PC-3 (cell line): ENCODE measurements at regions of chr17 and their contacts with region 1.

Region 1: GRCh38 chr17:48131216-48131824 is 23.8 kb downstream of the SNX11 start:
- DNase-seq: peak; percentile 96
- ATAC-seq: peak; percentile 87
- H3K4me3 ChIP-seq: no peak overlapping the region
- H3K27ac ChIP-seq: no peak overlapping the region
- H3K4me1 ChIP-seq: peaks cover 15% of the 10 kb centered on the region
- H3K27me3 ChIP-seq: no peaks in the 10 kb centered on the region
- CTCF ChIP-seq: peak; percentile 97

Region 2: GRCh38 chr17:48054238-48055185 is 76.8 kb before region 1 on chr17:
- CTCF ChIA-PET with region 1: no interaction called
- POLR2A ChIA-PET with region 1: interaction called, 18 read pairs
- intact Hi-C with region 1: no loop called
- DNase-seq: no peak
- ATAC-seq: no peak
- H3K4me3 ChIP-seq: no peak overlapping the region
- H3K27ac ChIP-seq: no peak overlapping the region
- H3K4me1 ChIP-seq: peaks cover 40% of the 10 kb centered on the region
- H3K27me3 ChIP-seq: no peaks in the 10 kb centered on the region
- CTCF ChIP-seq: no peak

Region 3: DNA sequence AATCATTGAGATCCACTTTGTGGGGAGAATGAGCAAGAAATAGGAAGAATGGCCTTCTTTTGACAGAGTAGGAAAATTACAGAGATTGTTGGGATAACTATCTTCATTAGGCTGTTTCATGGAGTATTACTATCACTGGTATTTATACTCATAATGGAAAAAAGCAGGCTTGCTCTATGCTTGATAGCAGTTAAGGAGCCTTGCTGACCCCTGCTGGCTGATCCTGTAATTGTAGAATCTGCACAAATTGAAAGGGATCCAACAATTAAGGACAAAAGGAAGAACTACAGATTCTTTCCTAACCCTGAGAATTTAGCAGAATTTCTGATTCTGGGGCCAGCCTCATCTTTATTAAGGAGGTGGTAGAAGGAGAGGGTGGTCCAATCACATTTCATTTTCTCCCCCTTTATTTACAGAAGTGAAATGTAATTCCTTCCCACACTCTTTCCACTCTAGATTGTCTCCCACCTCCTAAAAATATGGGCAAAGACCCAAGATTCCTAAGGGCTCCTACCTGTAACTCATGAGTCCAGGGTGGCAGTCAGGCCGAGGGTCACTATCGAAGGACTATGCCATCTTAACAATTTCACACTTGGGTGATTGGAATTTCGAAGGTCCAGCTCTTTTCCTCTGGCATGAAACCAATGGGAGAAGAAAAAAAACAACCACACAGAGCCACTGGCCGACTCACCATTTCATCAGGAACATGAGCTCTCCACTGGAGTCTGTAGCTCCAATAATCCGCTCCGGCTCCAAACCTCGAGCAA is 56.8 kb before region 1 on chr17:
- CTCF ChIA-PET with region 1: interaction called, 10 read pairs
- POLR2A ChIA-PET with region 1: no interaction called
- intact Hi-C with region 1: loop called (anchors 1 kb)
- DNase-seq: peak; percentile 95
- ATAC-seq: peak; percentile 91
- H3K4me3 ChIP-seq: no peak overlapping the region
- H3K27ac ChIP-seq: no peak overlapping the region
- H3K4me1 ChIP-seq: no peaks in the 10 kb centered on the region
- H3K27me3 ChIP-seq: no peaks in the 10 kb centered on the region
- CTCF ChIP-seq: peak; percentile 92

Region 4: DNA sequence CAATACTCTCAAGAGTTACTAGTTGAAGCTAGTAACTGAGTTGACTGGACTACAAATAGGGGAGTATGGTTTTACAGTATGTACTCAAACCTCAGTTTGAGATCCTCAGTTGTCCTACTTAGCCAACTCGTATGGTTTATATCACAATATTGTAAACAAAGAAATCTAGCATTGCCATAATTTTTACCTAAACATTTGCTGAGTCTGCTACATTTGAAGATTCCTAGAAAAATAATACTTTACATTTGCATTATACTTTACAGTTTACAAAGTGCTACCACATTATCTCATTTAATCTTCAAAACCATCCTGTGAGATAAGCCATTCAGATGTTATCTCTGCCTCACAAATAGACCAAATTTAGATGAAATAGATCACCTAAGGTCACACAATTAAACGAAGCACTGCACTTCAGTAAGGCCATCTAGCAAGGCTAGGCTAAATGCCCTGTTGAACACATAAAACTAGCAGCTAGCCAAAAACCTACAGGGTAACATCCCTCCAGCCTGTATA is 46.3 kb before region 1 on chr17:
- CTCF ChIA-PET with region 1: interaction called, 10 read pairs
- POLR2A ChIA-PET with region 1: no interaction called
- intact Hi-C with region 1: loop called (anchors 1 kb)
- DNase-seq: no peak
- ATAC-seq: no peak
- H3K4me3 ChIP-seq: no peak overlapping the region
- H3K27ac ChIP-seq: no peak overlapping the region
- H3K4me1 ChIP-seq: no peaks in the 10 kb centered on the region
- H3K27me3 ChIP-seq: no peaks in the 10 kb centered on the region
- CTCF ChIP-seq: no peak

Region 5: DNA sequence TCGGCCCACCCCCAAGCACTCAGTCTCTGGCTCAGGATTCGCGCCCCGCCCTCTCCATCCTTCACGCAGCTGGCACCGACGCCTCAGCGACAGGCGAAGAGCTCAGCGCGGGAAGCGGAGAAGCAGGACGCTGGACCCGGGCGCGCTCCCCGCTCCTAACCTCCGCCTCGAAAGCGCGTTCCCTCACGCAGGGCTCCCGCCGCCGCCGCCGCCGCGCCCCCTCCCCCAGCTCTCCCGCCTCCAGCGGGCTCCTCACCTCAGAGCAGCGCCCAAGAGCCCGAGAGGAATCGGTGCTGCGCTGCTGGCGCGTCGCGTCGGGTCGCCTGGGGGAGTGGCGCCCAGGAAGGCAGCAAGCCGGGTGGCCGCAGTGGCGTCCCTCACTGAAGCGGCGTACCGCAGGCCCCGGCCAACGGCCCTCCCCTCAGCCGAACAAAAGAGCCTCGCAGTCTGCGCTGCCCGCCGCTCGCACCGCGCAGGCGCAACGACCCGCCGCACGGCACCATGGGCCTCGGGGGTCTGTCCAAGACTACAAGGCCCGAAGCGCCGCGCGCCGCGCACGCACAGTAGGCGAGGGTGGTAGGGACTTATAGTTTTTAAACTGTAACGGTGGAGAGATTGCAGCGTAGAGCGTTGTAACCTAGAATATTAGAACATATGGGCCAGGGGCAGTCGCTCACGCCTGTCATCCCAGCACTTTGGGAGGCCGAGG is 30.2 kb before region 1 on chr17 and contains the start of gene CBX1:
- CTCF ChIA-PET with region 1: interaction called, 16 read pairs
- POLR2A ChIA-PET with region 1: no interaction called
- intact Hi-C with region 1: loop called (anchors 2 kb)
- DNase-seq: peak; percentile 96
- ATAC-seq: peak; percentile 95
- H3K4me3 ChIP-seq: peak within 1 kb of the TSS; percentile 78
- H3K27ac ChIP-seq: peak within 1 kb of the TSS; percentile 67
- H3K4me1 ChIP-seq: peaks cover 10% of the 10 kb centered on the region
- H3K27me3 ChIP-seq: no peaks in the 10 kb centered on the region
- CTCF ChIP-seq: no peak
- total RNA-seq, gene CBX1: 119 and 142 TPM in 2 replicates